Heart right ventricle (tissue), 16 donors: ENCODE measurements at regions of chr3 and their contacts with region 1.

Region 1: DNA sequence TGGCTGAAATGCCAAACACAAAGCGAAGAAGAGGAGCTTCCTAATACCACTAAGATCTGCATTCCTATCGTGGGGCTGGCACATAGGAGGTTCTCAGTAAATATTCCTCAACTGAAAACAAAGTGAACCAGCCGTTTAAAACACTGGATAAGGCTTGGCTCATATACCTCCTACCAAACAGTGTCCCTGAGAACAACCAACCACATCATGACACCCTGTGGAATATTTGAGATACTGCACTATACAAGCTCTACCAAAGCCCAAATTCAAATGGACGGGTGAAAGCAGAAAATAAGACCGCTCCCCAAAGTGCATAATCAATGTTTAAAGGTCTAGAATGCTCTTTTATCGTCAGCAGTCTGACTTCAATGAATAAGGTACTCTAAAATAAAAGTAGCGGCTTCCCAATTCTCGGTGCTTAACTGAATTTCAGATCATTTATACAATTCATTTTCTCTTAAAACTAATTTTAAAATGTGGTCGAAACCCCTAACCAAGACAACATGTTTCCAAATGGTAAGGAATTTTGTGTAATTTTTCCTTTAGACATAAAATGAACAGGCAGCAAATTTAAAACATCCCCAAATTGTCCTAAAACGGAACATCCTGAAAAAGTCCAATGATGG is 425.8 kb downstream of the ERC2 start:
- DNase-seq: no peak
- ATAC-seq: peak in 6 of 8 donors; percentile 57 to 82 (median 64)
- H3K4me3 ChIP-seq: no peak overlapping the region
- H3K27ac ChIP-seq: no peak overlapping the region
- H3K4me1 ChIP-seq: no peaks in the 10 kb centered on the region
- H3K27me3 ChIP-seq: peaks cover 0 to 45% (median 11%) of the 10 kb centered on the region in 7 donors
- CTCF ChIP-seq: peak in 8 of 9 donors; percentile 33 to 66 (median 54)

Region 2: GRCh38 chr3:55491296-55491816 is 551.1 kb before region 1 on chr3:
- intact Hi-C with region 1: loop called in 9 of 10 experiments (anchors 5 to 10 kb)
- DNase-seq: no peak
- ATAC-seq: no peak
- H3K4me3 ChIP-seq: no peak overlapping the region
- H3K27ac ChIP-seq: no peak overlapping the region
- H3K4me1 ChIP-seq: peaks cover 0 to 24% (median 12%) of the 10 kb centered on the region in 9 donors
- H3K27me3 ChIP-seq: peaks cover 0 to 62% (median 38%) of the 10 kb centered on the region in 7 donors
- CTCF ChIP-seq: no peak

Region 3: DNA sequence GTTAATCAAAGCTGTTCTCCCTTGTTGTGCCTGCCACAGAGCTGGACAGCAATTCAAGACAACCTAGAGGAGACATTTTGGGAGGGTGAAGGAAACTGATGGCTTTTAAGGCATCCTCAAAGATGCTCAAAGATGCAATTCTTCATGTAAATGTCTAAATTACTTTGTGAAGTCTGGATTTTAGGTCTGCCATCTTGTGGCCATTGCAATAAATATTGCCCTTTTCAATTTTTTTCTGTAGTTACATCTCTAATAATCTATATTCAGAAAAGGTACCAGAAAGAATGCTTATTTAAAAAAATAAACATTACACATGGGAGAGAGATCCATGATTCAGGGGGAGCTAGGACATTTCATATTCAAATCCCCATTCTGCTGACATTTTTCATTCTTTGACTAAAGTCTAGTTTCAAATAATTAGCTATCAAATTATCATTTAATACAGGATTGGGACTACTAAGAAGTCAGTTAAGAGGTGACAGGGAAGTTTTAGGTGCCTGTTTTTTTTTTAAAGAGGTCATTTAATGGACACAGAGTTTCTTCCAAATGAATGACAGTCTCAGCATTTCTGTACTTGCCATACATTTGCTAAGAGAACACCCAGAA is 295.5 kb before region 1 on chr3:
- intact Hi-C with region 1: loop called in 1 of 10 experiments (anchors 10 kb)
- DNase-seq: no peak
- ATAC-seq: no peak
- H3K4me3 ChIP-seq: no peak overlapping the region
- H3K27ac ChIP-seq: no peak overlapping the region
- H3K4me1 ChIP-seq: no peaks in the 10 kb centered on the region
- H3K27me3 ChIP-seq: no peaks in the 10 kb centered on the region
- CTCF ChIP-seq: peak in 6 of 9 donors; percentile 33 to 53 (median 46)

Region 4: GRCh38 chr3:56207922-56208321 is 165.5 kb after region 1 on chr3:
- intact Hi-C with region 1: no loop called
- DNase-seq: no peak
- ATAC-seq: no peak
- H3K4me3 ChIP-seq: no peak overlapping the region
- H3K27ac ChIP-seq: no peak overlapping the region
- H3K4me1 ChIP-seq: no peaks in the 10 kb centered on the region
- H3K27me3 ChIP-seq: no peaks in the 10 kb centered on the region
- CTCF ChIP-seq: no peak